WTC11 (cell line): ENCODE measurements at regions of chr6 and their contacts with region 1.

Region 1: DNA sequence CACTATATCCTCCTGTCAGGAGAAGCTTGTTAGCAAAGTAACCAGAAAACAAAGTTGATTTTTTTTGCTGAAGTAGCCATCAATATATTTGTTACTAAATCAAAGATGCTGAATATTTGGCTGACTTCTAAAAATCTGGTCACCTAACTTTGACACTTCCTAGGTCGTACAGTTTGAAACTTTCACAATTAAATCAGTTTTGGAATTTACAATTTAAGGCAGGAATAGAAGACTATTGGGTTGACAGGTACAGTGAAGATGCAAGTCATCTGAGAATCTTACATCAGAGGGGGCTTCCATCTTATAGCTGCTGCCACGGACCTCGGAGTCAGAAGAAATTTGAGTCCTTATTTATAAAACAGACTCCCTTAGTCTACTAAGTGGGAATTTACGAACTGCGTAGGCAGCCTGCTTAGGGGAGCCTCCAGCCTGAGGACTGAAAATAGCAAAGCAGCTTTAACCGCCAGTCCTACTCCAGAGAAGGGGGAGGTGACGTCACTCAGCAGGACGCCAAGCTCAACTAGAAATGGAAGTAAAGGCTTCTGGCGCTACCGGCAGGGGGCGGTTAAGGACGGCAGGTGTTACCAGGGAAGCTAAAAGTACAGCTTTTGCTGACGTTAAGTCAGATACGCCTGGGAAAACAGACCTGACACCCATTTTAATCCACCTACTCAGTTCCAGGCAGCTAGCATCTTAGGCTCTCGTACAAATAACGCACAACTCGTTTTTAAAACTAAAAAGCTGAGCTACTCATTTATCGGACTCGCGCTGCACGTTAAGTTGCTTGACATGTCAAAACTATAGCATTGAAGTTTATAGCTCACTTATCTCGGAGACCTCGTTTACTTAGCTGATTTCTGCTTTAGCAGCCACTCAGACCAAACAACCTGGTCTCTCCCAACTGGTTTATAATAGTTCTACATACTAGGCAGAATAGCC is 61.1 kb upstream of the HFE start:
- DNase-seq: peak; percentile 95
- ATAC-seq: peak; percentile 12
- H3K4me3 Mint-ChIP-seq: peak overlapping the region; percentile 92
- H3K27ac Mint-ChIP-seq: peak overlapping the region; percentile 98
- H3K4me1 Mint-ChIP-seq: peaks cover 73% of the 10 kb centered on the region
- H3K27me3 Mint-ChIP-seq: no peaks in the 10 kb centered on the region
- CTCF ChIP-seq: peak; percentile 60

Region 2: DNA sequence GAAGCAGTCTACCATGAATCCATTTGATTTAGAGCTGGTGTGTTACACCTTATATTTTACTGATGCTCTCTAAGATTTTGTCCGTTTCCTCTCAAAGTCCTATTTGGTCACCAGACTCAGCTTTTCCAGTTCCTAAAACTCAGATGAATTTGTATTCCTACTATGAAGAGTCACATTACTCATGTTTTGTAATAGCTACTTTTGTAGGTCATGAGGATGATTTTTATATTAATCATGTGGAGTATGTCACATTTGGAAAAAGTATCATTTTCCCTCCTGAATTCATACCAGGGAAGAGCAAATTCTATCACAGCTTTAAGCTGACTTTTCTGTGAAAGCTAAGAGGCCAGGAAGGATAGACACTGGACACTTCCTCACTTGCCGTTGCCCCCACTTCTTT is 514.8 kb before region 1 on chr6:
- CTCF ChIA-PET with region 1: no interaction called
- POLR2A ChIA-PET with region 1: no interaction called
- DNase-seq: no peak
- ATAC-seq: no peak
- H3K4me3 Mint-ChIP-seq: no peak overlapping the region
- H3K27ac Mint-ChIP-seq: no peak overlapping the region
- H3K4me1 Mint-ChIP-seq: 0 out of 2 replicates have a peak, but pooled peaks cover 3% of the 10 kb centered on the region
- H3K27me3 Mint-ChIP-seq: no peaks in the 10 kb centered on the region
- CTCF ChIP-seq: no peak

Region 3: GRCh38 chr6:25992413-25993037 is 33.6 kb before region 1 on chr6:
- CTCF ChIA-PET with region 1: interaction called, 19 read pairs
- POLR2A ChIA-PET with region 1: interaction called, 8 read pairs
- DNase-seq: peak; percentile 95
- ATAC-seq: peak; percentile 89
- H3K4me3 Mint-ChIP-seq: peak overlapping the region; percentile 96
- H3K27ac Mint-ChIP-seq: peak overlapping the region; percentile 89
- H3K4me1 Mint-ChIP-seq: peaks cover 33% of the 10 kb centered on the region
- H3K27me3 Mint-ChIP-seq: no peaks in the 10 kb centered on the region
- CTCF ChIP-seq: peak; percentile 91

Region 4: DNA sequence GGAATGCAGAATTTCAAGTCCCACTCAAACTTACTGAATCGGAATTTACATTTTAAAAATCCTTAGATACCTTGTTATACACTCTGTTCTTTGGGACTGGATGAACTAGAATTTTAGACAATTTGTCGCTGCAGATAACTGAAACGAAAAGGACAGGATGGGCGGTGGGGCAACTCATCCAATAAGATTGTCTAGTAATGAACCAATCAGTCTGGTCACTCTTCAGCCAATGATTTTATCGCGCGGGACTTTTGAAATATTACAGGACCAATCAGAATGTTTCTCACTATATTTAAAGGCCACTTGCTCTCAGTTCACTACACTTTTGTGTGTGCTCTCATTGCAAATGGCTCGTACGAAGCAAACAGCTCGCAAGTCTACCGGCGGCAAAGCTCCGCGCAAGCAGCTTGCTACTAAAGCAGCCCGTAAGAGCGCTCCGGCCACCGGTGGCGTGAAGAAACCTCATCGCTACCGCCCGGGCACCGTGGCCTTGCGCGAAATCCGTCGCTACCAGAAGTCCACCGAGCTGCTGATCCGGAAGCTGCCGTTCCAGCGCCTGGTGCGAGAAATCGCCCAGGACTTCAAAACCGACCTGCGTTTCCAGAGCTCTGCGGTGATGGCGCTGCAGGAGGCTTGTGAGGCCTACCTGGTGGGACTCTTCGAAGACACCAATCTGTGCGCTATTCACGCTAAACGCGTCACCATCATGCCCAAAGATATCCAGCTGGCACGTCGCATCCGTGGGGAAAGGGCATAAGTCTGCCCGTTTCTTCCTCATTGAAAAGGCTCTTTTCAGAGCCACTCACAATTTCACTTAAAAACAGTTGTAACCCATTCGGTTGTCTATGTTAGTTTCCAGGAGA is 19.1 kb after region 1 on chr6:
- CTCF ChIA-PET with region 1: interaction called, 5 read pairs
- POLR2A ChIA-PET with region 1: interaction called, 365 read pairs
- DNase-seq: peak; percentile 43
- ATAC-seq: peak; percentile 22; the same call in 1 of the 2 replicates
- H3K4me3 Mint-ChIP-seq: peak overlapping the region; percentile 64
- H3K27ac Mint-ChIP-seq: peak overlapping the region; percentile 95
- H3K4me1 Mint-ChIP-seq: peaks cover 42% of the 10 kb centered on the region
- H3K27me3 Mint-ChIP-seq: no peaks in the 10 kb centered on the region
- CTCF ChIP-seq: no peak

Region 5: DNA sequence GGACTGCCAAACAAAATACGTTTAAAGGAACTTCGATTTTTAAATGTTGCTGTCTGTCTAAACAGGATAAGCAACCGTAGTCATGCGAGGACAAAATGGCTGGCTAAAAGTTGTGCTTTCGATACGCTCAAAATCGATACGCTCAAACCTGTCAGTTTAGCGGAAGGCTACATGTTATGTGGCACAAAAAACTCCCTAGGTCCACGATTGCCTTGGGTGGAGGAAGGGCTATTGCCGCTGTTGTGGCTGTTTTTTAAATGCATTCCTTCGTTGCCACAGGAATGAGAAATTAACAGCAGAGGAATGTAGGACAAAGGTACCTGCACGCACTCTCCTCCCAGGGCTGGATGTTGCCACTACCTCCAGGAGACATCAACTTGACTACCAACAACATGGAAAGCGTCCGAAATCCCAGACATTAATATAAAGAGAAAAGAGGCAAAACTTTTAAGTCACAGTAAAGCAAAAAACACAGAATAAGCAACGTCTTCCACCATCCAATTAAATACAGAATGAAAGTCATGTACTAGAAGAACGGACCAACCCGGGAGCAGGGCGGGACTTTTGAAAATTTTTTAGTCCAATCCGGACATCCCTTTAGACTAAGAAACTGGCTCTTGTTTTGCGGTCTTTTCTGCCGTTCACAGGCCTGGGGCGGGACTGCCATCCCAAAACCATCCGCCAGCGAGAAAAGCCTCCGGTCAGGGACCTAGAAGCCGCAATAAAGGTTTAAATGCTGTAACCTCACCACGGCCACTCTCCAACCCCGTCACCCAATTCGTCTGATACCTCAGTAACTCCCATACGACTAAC is 28.9 kb after region 1 on chr6:
- CTCF ChIA-PET with region 1: interaction called, 4 read pairs
- POLR2A ChIA-PET with region 1: interaction called, 365 read pairs
- DNase-seq: peak; percentile 74
- ATAC-seq: peak; percentile 66
- H3K4me3 Mint-ChIP-seq: peak overlapping the region; percentile 89
- H3K27ac Mint-ChIP-seq: peak overlapping the region; percentile 98
- H3K4me1 Mint-ChIP-seq: peaks cover 29% of the 10 kb centered on the region
- H3K27me3 Mint-ChIP-seq: no peaks in the 10 kb centered on the region
- CTCF ChIP-seq: no peak

Region 6: DNA sequence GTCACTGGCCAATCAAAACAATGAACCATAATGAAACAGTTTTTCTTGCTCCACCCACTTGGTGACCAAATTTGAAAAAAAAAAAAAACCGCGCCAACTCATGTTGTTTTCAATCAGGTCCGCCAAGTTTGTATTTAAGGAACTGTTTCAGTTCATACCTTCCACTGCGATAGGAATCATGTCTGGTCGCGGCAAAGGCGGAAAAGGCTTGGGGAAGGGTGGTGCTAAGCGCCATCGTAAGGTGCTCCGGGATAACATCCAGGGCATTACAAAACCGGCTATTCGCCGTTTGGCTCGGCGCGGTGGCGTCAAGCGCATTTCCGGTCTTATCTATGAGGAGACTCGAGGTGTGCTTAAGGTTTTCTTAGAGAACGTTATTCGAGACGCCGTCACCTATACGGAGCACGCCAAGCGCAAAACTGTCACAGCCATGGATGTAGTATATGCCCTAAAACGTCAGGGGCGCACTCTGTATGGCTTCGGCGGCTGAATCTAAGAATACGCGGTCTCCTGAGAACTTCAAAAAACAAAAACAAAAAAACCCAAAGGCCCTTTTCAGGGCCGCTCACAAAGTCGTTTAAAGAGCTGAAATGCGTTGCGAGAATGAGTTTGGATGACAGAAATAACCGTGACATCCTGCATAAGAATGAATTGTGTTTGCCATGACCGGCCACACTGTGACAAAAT is 77.8 kb after region 1 on chr6:
- CTCF ChIA-PET with region 1: interaction called, 10 read pairs
- POLR2A ChIA-PET with region 1: interaction called, 57 read pairs
- DNase-seq: peak; percentile 73
- ATAC-seq: peak; percentile 79
- H3K4me3 Mint-ChIP-seq: peak overlapping the region; percentile 84
- H3K27ac Mint-ChIP-seq: peak overlapping the region; percentile 98
- H3K4me1 Mint-ChIP-seq: peaks cover 23% of the 10 kb centered on the region
- H3K27me3 Mint-ChIP-seq: no peaks in the 10 kb centered on the region
- CTCF ChIP-seq: no peak

Region 7: GRCh38 chr6:26140254-26140966 is 114.2 kb after region 1 on chr6:
- CTCF ChIA-PET with region 1: no interaction called
- POLR2A ChIA-PET with region 1: no interaction called
- DNase-seq: no peak
- ATAC-seq: no peak
- H3K4me3 Mint-ChIP-seq: no peak overlapping the region
- H3K27ac Mint-ChIP-seq: no peak overlapping the region
- H3K4me1 Mint-ChIP-seq: peaks cover 19% of the 10 kb centered on the region
- H3K27me3 Mint-ChIP-seq: no peaks in the 10 kb centered on the region
- CTCF ChIP-seq: no peak

Region 8: GRCh38 chr6:26234421-26235296 is 208.5 kb after region 1 on chr6:
- CTCF ChIA-PET with region 1: no interaction called
- POLR2A ChIA-PET with region 1: interaction called, 21 read pairs
- DNase-seq: no peak
- ATAC-seq: peak; percentile 70
- H3K4me3 Mint-ChIP-seq: peak overlapping the region; percentile 94
- H3K27ac Mint-ChIP-seq: peak overlapping the region; percentile 99
- H3K4me1 Mint-ChIP-seq: peaks cover 33% of the 10 kb centered on the region
- H3K27me3 Mint-ChIP-seq: no peaks in the 10 kb centered on the region
- CTCF ChIP-seq: no peak

Region 9: DNA sequence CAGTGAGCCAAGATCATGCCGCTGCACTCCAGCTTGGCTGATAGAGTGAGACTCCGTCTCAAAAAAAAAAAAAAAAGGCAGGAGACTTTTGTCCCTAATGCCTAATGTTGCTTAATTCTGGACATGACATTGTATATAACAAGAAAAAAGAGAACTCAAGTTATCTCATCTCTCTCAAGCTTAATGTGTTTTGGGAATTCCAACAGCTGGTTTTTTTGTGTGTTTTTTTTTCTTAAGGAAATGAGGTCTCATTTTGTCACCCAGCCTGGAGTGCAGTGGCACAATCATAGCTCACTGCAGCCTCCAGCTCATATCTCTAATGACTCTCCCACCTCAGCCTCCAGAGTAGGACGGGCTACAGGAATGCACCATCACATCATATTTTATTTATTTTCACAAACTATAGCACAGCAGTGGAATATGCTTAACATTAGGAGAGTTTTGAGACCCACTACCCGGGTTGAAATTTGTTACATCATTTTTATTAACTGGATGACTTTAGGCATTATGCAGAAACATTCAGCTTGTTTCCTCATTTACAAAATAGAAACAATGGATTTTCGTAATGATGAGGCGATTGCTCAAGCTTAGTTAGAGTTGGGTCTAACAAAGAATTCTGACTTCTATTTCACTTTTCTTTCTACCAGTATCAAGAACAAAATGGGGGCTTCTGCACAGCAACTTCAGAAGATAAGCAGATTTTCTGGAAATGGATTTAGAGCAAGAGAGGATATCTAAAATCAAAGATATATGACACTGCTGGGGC is 234.7 kb after region 1 on chr6:
- CTCF ChIA-PET with region 1: no interaction called
- POLR2A ChIA-PET with region 1: no interaction called
- DNase-seq: no peak
- ATAC-seq: no peak
- H3K4me3 Mint-ChIP-seq: no peak overlapping the region
- H3K27ac Mint-ChIP-seq: no peak overlapping the region
- H3K4me1 Mint-ChIP-seq: peaks cover 34% of the 10 kb centered on the region
- H3K27me3 Mint-ChIP-seq: no peaks in the 10 kb centered on the region; the same call in 1 of the 2 replicates
- CTCF ChIP-seq: no peak

Region 10: GRCh38 chr6:27132532-27133280 is 1106.5 kb after region 1 on chr6:
- CTCF ChIA-PET with region 1: no interaction called
- POLR2A ChIA-PET with region 1: interaction called, 12 read pairs
- DNase-seq: peak; percentile 85
- ATAC-seq: peak; percentile 86
- H3K4me3 Mint-ChIP-seq: no peak overlapping the region
- H3K27ac Mint-ChIP-seq: no peak overlapping the region
- H3K4me1 Mint-ChIP-seq: peaks cover 65% of the 10 kb centered on the region
- H3K27me3 Mint-ChIP-seq: no peaks in the 10 kb centered on the region
- CTCF ChIP-seq: no peak